MCF 10A (cell line): ENCODE measurements at regions of chr6 and their contacts with region 1.

Region 1: DNA sequence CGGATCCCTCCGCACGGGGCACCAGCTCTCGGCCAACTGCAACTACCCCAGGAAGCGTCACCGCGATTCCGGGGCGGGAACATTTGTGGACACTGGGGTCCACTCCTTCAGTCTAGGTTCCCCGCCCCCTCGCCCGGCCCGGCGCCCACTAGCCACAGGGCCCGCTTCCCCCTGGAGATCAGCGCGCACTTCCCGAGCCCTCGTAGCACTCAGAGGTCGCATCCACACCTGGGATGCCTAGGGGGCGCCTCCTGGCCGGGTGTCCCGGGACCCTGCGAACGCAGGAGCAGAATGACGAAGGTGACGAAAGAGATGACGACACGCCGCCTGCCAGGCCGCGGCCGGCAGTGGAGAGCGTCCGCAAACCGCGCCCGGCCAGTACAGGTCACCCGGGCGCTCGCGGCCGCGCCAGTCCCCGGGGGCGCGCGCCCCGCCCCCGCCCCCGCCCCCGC is 309 bp upstream of the AIG1 start:
- DNase-seq: peak; percentile 90
- H3K4me3 Mint-ChIP-seq: peak overlapping the region; percentile 94
- H3K27ac Mint-ChIP-seq: peak overlapping the region; percentile 97
- H3K4me1 Mint-ChIP-seq: peaks cover 37% of the 10 kb centered on the region
- H3K27me3 Mint-ChIP-seq: no peaks in the 10 kb centered on the region
- CTCF ChIP-seq: no peak

Region 2: DNA sequence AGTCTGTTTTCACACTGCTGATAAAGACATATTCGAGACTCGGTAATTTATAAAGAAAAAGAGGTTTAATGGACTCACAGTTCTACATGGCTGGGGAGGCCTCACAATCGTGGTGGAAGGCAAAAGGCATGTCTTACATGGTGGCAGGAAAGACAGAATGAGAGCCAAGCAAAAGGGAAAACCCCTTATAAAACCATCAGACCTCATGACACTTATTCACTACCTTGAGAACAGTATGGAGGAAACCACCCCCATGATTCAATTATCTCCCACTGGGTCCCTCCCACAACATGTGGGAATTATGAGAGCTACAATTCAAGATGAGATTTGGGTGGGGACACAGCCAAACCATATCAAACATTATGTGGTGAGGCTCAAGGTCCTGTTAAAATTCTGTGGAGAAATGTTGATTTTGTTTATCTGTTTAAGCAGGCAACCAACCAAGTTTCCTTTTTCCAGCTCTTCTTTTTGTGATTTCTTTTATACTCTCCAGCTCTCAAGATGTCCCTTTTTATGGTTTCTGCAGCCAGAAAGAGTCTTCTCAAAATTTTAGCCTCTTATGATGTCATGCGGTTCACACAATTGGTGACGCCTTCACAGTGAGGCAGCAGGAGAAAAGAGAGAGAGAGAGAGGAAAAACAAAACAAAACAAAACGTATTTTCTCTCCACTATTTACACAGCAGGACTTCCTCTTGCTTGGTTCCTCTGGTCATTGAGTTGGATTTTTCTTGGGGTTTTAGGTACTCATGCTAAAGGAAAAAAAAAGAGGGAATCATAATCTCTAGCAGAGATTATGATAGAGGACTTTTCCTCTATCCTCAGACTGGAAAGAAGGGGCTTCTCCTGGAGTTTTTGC is 18.3 kb after region 1 on chr6:
- CTCF ChIA-PET with region 1: no interaction called
- POLR2A ChIA-PET with region 1: interaction called, 30 read pairs
- intact Hi-C with region 1: no loop called
- DNase-seq: no peak
- H3K4me3 Mint-ChIP-seq: no peak overlapping the region
- H3K27ac Mint-ChIP-seq: no peak overlapping the region
- H3K4me1 Mint-ChIP-seq: peaks cover 5% of the 10 kb centered on the region
- H3K27me3 Mint-ChIP-seq: no peaks in the 10 kb centered on the region
- CTCF ChIP-seq: no peak

Region 3: DNA sequence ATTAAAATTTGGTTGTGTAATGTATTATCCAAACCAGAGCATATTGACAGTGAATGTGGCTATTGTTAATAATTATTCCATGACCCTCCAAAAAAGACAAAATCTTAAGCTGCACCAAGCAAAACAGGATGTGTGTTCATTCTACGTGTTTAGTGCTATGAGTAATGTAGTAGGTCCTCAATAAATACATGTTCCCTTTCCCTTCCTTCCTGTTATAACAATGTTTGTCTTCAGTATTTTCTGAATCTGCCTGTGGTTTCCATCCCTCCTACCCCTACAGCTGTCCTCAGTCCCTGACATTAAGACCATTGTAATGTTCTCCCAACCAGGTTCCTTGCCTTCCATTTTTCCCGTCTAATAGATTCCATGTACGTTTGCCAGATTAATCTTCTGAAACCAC is 164.1 kb after region 1 on chr6:
- CTCF ChIA-PET with region 1: interaction called, 3 read pairs
- POLR2A ChIA-PET with region 1: interaction called, 10 read pairs
- intact Hi-C with region 1: no loop called
- DNase-seq: no peak
- H3K4me3 Mint-ChIP-seq: no peak overlapping the region
- H3K27ac Mint-ChIP-seq: peak overlapping the region; percentile 84
- H3K4me1 Mint-ChIP-seq: peaks cover 17% of the 10 kb centered on the region
- H3K27me3 Mint-ChIP-seq: no peaks in the 10 kb centered on the region
- CTCF ChIP-seq: no peak

Region 4: GRCh38 chr6:143299253-143300166 is 239.1 kb after region 1 on chr6:
- CTCF ChIA-PET with region 1: no interaction called
- POLR2A ChIA-PET with region 1: no interaction called
- intact Hi-C with region 1: no loop called
- DNase-seq: no peak
- H3K4me3 Mint-ChIP-seq: no peak overlapping the region
- H3K27ac Mint-ChIP-seq: no peak overlapping the region
- H3K4me1 Mint-ChIP-seq: no peaks in the 10 kb centered on the region
- H3K27me3 Mint-ChIP-seq: no peaks in the 10 kb centered on the region
- CTCF ChIP-seq: no peak

Region 5: DNA sequence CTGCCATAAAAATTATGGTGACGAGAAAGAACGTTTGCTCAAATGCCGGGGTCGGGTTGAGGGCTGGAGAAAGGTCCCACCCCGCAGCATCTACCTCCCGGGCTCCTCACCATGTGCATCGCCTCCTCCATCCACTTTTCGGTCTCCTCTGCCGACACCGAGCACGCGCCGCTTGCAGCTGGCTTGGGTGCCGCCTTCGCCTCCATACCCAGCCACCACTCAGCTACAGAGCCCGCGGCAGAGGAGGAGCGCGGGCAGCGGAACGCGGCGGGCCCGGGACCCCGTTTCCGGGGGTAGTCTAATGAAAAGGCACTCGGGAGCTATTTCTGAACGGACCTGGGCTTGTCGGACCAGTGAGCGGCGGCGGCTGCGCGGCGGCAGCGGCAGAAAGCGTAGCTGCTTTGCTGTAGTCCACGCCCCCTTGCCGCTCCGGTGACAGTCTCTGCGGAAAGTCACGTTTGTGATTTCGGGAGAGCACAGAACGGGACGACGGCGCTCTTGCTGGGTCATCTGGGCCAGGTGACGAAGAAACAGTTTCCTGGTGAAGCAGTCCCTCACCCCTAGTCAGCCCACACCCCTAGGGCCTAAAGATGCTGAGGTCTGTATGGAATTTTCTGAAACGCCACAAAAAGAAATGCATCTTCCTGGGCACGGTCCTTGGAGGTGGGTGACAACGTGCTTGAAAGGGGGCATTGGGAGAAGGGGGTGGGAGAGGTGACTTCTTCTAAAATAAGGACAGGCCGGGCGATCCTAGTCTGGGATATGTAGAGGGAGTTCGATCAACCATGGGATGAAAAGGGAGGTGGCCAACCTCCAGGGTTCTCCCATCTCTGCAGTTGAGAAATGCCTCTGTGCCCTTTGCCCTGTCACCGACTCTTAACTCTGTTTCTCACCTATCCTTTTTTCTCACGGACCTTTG is 390.3 kb after region 1 on chr6 and contains the starts of genes ADAT2 and PEX3:
- CTCF ChIA-PET with region 1: no interaction called
- POLR2A ChIA-PET with region 1: interaction called, 36 read pairs
- intact Hi-C with region 1: no loop called
- DNase-seq: peak; percentile 95
- H3K4me3 Mint-ChIP-seq: peak within 1 kb of the TSS; percentile 97
- H3K27ac Mint-ChIP-seq: peak within 1 kb of the TSS; percentile 97
- H3K4me1 Mint-ChIP-seq: peaks cover 24% of the 10 kb centered on the region
- H3K27me3 Mint-ChIP-seq: no peaks in the 10 kb centered on the region
- CTCF ChIP-seq: no peak
- total RNA-seq, gene ADAT2: 23.2 and 27.7 TPM in 2 replicates
- total RNA-seq, gene PEX3: 19.8 and 24.3 TPM in 2 replicates

Region 6: GRCh38 chr6:143695130-143695968 is 635.0 kb after region 1 on chr6:
- CTCF ChIA-PET with region 1: no interaction called
- POLR2A ChIA-PET with region 1: no interaction called
- intact Hi-C with region 1: no loop called
- DNase-seq: no peak
- H3K4me3 Mint-ChIP-seq: no peak overlapping the region
- H3K27ac Mint-ChIP-seq: no peak overlapping the region
- H3K4me1 Mint-ChIP-seq: no peaks in the 10 kb centered on the region
- H3K27me3 Mint-ChIP-seq: no peaks in the 10 kb centered on the region
- CTCF ChIP-seq: no peak